AG04450 (cell line): ENCODE measurements at regions of chr3 and their contacts with region 1.

Region 1: GRCh38 chr3:131142580-131142979 is 115.9 kb downstream of the NEK11 start:
- DNase-seq: no peak
- H3K4me3 ChIP-seq: no peak overlapping the region
- H3K27ac ChIP-seq: no peak overlapping the region
- H3K27me3 ChIP-seq: no peaks in the 10 kb centered on the region
- CTCF ChIP-seq: peak; percentile 25

Region 2: GRCh38 chr3:131033480-131034080 is 109.0 kb before region 1 on chr3:
- CTCF ChIA-PET with region 1: interaction called, 16 read pairs
- POLR2A ChIA-PET with region 1: no interaction called
- DNase-seq: no peak
- H3K4me3 ChIP-seq: no peak overlapping the region
- H3K27ac ChIP-seq: no peak overlapping the region
- H3K27me3 ChIP-seq: no peaks in the 10 kb centered on the region
- CTCF ChIP-seq: peak; percentile 63